ENCODE measurements at regions of chr4 and their contacts with region 1.

Region 1: GRCh38 chr4:42568610-42569207 is 88.2 kb downstream of the ATP8A1 start:
- DNase-seq: peak; percentile 25
- H3K4me3 Mint-ChIP-seq: no peak overlapping the region
- H3K27ac Mint-ChIP-seq: no peak overlapping the region
- H3K4me1 Mint-ChIP-seq: no peaks in the 10 kb centered on the region
- H3K27me3 Mint-ChIP-seq: no peaks in the 10 kb centered on the region

Region 2: DNA sequence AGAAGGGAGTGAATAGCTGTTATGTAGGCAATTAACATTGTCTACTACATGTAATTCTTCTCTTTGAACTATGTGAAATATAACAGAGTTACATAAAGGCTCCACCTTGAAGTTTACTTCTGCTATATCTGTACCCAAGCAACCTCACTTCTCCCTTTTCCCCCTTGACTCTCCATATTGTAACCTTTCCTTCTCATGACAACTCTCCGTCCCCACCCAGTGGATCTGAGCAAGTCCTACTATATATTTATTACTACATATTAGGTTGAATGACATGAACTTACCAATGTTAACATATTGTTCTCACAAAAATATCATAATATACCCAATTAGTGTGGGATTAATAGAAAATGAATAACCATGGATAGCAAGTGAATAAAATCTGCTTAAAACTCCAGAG is 181.4 kb after region 1 on chr4:
- intact Hi-C with region 1: loop called (anchors 1 kb)
- DNase-seq: no peak
- H3K4me3 Mint-ChIP-seq: no peak overlapping the region
- H3K27ac Mint-ChIP-seq: no peak overlapping the region
- H3K4me1 Mint-ChIP-seq: peaks cover 6% of the 10 kb centered on the region
- H3K27me3 Mint-ChIP-seq: no peaks in the 10 kb centered on the region

Region 3: GRCh38 chr4:42768125-42768748 is 199.5 kb after region 1 on chr4:
- intact Hi-C with region 1: loop called (anchors 1 kb)
- DNase-seq: no peak
- H3K4me3 Mint-ChIP-seq: no peak overlapping the region
- H3K27ac Mint-ChIP-seq: no peak overlapping the region
- H3K4me1 Mint-ChIP-seq: no peaks in the 10 kb centered on the region
- H3K27me3 Mint-ChIP-seq: peaks cover 2% of the 10 kb centered on the region

Region 4: GRCh38 chr4:42816189-42816879 is 247.6 kb after region 1 on chr4:
- intact Hi-C with region 1: loop called (anchors 2 kb)
- DNase-seq: no peak
- H3K4me3 Mint-ChIP-seq: no peak overlapping the region
- H3K27ac Mint-ChIP-seq: no peak overlapping the region
- H3K4me1 Mint-ChIP-seq: no peaks in the 10 kb centered on the region
- H3K27me3 Mint-ChIP-seq: peaks cover 2% of the 10 kb centered on the region

Region 5: DNA sequence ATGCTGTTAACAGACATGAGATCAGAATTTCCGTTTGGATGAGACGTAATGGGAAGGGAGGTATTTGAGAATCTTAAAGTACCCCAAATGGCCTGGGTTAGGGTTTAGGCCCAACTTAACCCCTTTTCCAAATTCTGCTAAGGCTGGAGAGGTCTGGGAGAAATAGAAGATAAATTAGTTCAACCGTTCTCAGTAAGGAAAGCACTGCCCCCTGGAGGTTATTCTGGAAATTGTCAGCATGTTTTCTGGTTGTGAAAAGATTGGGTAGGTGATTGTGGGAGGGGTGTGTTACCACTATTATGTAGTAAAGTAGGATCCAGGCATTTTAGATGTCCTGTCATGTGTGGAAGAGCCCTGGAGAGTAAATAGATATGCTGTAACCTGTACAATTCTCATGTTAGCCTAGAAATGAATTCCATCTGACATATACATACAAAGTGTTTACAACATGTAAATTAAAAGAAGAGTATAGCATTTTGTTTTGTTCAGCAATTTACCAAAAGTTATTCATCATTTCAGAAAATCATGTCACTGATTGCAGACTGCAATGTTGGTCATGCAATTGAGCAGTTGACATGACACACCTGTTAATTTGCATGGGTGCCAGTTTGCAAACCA is 297.0 kb after region 1 on chr4:
- intact Hi-C with region 1: loop called (anchors 1 kb)
- DNase-seq: peak; percentile 27
- H3K4me3 Mint-ChIP-seq: no peak overlapping the region
- H3K27ac Mint-ChIP-seq: no peak overlapping the region
- H3K4me1 Mint-ChIP-seq: no peaks in the 10 kb centered on the region
- H3K27me3 Mint-ChIP-seq: no peaks in the 10 kb centered on the region